Naive thymus-derived CD4-positive, alpha-beta T cell (primary cell): ENCODE measurements at regions of chr5 and their contacts with region 1.

Region 1: DNA sequence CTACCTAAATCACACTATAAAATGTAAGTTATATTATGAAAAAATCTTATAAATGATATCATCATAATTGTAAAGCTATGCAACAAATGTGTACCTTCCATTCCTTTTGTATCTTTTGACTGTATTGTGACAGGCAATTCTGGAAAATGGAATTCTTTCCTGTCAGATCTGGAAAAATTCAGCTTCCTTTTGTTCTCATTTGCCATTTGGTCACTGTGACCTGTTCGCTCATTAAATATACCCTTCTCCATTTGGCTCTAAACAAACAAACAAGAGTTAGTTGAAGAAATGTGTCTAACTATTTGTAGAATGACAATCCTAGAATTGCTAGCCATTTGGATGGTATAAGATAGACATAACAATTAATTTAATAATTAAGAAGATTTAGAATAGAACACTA is 62.7 kb downstream of the CDKL3 start:
- DNase-seq: no peak
- ATAC-seq: no peak
- H3K4me3 ChIP-seq: no peak overlapping the region
- H3K4me3 Mint-ChIP-seq: no peak overlapping the region
- H3K27ac ChIP-seq: no peak overlapping the region
- H3K27ac Mint-ChIP-seq: no peak overlapping the region
- H3K4me1 ChIP-seq: no peaks in the 10 kb centered on the region
- H3K4me1 Mint-ChIP-seq: peaks cover 0 to 5% (median 0%) of the 10 kb centered on the region in 7 donors
- H3K27me3 ChIP-seq: no peaks in the 10 kb centered on the region
- H3K27me3 Mint-ChIP-seq: peaks cover 0 to 8% (median 0%) of the 10 kb centered on the region in 5 donors

Region 2: GRCh38 chr5:133846478-133847226 is 457.7 kb before region 1 on chr5:
- CTCF ChIA-PET with region 1: no interaction called
- POLR2A ChIA-PET with region 1: no interaction called
- intact Hi-C with region 1: no loop called
- DNase-seq: no peak
- ATAC-seq: no peak
- H3K4me3 ChIP-seq: no peak overlapping the region
- H3K4me3 Mint-ChIP-seq: no peak overlapping the region
- H3K27ac ChIP-seq: no peak overlapping the region
- H3K27ac Mint-ChIP-seq: no peak overlapping the region
- H3K4me1 ChIP-seq: no peaks in the 10 kb centered on the region
- H3K4me1 Mint-ChIP-seq: peaks cover 0 to 12% (median 2%) of the 10 kb centered on the region in 7 donors
- H3K27me3 ChIP-seq: no peaks in the 10 kb centered on the region
- H3K27me3 Mint-ChIP-seq: peaks cover 0 to 7% (median 7%) of the 10 kb centered on the region in 5 donors

Region 3: DNA sequence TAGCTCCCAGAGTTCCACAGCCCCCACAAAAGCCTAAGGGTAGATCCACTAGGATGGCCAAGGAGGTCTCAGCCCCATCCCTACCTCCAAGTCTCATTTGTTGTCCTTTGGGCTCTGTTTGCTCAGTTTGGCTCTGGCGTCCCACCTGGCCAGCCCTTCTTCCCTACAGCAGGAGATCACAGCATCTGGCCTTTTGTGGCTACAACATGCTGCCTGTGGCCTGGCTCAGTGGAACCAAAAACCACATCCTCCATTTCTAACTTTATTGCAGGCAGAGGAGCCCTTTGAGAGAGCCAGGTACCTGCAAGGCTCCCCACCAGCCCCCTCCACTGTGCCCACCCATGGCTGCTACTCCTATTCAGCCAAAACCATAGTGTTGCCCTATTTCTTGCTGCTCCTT is 232.6 kb after region 1 on chr5:
- CTCF ChIA-PET with region 1: no interaction called
- POLR2A ChIA-PET with region 1: no interaction called
- intact Hi-C with region 1: no loop called
- DNase-seq: no peak
- ATAC-seq: no peak
- H3K4me3 ChIP-seq: no peak overlapping the region
- H3K4me3 Mint-ChIP-seq: peak overlapping the region in 2 of 10 donors; percentile 32 to 67
- H3K27ac ChIP-seq: peak overlapping the region; percentile 25
- H3K27ac Mint-ChIP-seq: peak overlapping the region in 8 of 9 donors; percentile 46 to 82 (median 58)
- H3K4me1 ChIP-seq: peaks cover 40 to 47% of the 10 kb centered on the region in 2 donors
- H3K4me1 Mint-ChIP-seq: peaks cover 43 to 78% (median 72%) of the 10 kb centered on the region in 7 donors
- H3K27me3 ChIP-seq: no peaks in the 10 kb centered on the region
- H3K27me3 Mint-ChIP-seq: no peaks in the 10 kb centered on the region

Region 4: DNA sequence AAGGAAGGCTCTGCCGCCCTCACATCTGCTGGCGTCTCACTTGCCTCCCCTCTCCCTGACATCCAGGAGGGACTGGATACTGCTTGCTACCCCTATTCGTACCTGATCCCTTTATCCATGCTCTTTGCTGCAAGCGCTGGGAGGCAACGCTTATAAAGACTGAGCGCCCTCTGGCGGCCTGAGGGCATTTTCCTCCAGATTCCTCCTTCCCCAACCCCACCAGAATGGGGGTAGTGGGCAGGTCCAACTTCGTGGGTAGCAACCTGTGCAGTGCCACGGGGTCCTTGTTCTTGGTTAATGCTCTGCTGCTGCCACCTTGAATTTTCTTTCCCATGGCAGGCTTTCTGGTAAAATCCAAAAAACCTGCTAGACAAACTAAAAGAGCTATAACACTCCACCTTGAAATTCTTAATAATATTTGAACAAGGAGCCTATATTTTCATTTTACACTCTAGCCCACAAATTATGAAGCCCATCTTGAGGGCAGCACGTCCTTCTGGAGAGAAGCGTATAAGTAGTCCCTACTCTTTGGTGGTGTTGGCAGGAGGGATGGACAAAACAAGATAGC is 273.6 kb after region 1 on chr5:
- CTCF ChIA-PET with region 1: interaction called, 6 read pairs
- POLR2A ChIA-PET with region 1: no interaction called
- intact Hi-C with region 1: loop called (anchors 1 to 2 kb)
- DNase-seq: peak; percentile 56 to 77 (median 69)
- ATAC-seq: peak; percentile 80
- H3K4me3 ChIP-seq: no peak overlapping the region
- H3K4me3 Mint-ChIP-seq: no peak overlapping the region
- H3K27ac ChIP-seq: peak overlapping the region; percentile 44
- H3K27ac Mint-ChIP-seq: peak overlapping the region in 8 of 9 donors; percentile 2 to 78 (median 63)
- H3K4me1 ChIP-seq: no peaks in the 10 kb centered on the region
- H3K4me1 Mint-ChIP-seq: peaks cover 0 to 25% (median 13%) of the 10 kb centered on the region in 7 donors
- H3K27me3 ChIP-seq: no peaks in the 10 kb centered on the region
- H3K27me3 Mint-ChIP-seq: no peaks in the 10 kb centered on the region

Region 5: GRCh38 chr5:134662971-134663370 is 358.7 kb after region 1 on chr5:
- CTCF ChIA-PET with region 1: no interaction called
- POLR2A ChIA-PET with region 1: no interaction called
- intact Hi-C with region 1: loop called in 1 of 2 experiments (anchors 10 kb)
- DNase-seq: no peak
- ATAC-seq: no peak
- H3K4me3 ChIP-seq: no peak overlapping the region
- H3K4me3 Mint-ChIP-seq: no peak overlapping the region
- H3K27ac ChIP-seq: no peak overlapping the region
- H3K27ac Mint-ChIP-seq: no peak overlapping the region
- H3K4me1 ChIP-seq: no peaks in the 10 kb centered on the region
- H3K4me1 Mint-ChIP-seq: peaks cover 4 to 26% (median 19%) of the 10 kb centered on the region in 7 donors
- H3K27me3 ChIP-seq: no peaks in the 10 kb centered on the region
- H3K27me3 Mint-ChIP-seq: no peaks in the 10 kb centered on the region